ENCODE measurements at regions of chr2 and their contacts with region 1.

Region 1: GRCh38 chr2:84939426-84940087 is 31.4 kb upstream of the KCMF1 start:
- DNase-seq: peak; percentile 80
- H3K4me3 ChIP-seq: peak overlapping the region in 1 of 4 donors; percentile 27
- H3K27ac ChIP-seq: peak overlapping the region; percentile 61 to 79 (median 75)
- H3K4me1 ChIP-seq: peaks cover 6 to 34% (median 16%) of the 10 kb centered on the region in 4 donors
- H3K27me3 ChIP-seq: no peaks in the 10 kb centered on the region
- CTCF ChIP-seq: peak in 2 of 5 experiments; percentile 29 to 40
- EP300 ChIP-seq: no peak
- POLR2A ChIP-seq: no peak

Region 2: DNA sequence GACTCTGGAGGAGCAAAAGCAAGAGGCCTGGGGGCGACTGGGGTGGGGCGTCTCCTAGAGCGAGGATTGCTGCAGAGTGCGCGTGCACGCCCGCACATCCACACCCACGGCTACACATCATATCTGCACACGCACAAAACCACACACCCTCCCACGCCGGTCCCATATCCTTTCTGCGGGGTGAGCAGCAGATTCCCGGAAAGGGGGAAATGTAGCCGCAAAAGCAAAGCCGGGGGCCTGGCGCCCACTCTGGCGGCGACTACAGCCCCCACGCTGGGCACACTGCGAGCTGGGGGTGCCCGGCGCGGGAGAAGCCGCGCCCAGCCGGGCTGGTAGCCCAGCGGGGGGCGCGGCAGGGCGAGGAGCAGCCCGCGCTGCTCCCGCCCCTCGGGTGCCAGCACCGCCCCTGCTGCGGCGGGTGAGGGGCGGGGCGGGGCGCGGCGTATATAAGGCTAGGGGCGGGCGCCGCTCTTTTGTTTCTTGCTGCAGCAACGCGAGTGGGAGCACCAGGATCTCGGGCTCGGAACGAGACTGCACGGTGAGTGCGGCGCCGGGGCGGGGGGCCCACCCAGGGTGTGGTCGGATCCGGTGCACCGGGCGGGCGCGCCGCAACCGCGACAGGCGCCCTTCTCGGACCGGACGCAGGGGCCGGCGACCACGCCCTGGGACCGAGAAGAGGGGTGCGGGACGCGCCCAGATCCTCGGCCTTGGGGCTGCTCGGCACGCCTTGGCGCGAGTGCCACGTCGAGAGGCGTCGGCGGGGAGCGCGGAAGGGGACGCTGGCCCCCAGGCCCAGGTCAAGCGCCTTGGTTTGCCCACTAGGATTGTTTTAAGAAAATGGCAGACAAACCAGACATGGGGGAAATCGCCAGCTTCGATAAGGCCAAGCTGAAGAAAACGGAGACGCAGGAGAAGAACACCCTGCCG is 34.1 kb before region 1 on chr2 and contains the start of gene TMSB10:
- in situ Hi-C with region 1: no loop called
- intact Hi-C with region 1: loop called (anchors 2 kb)
- DNase-seq: peak; percentile 93
- H3K4me3 ChIP-seq: peak within 1 kb of the TSS; percentile 86 to 97 (median 90)
- H3K27ac ChIP-seq: peak within 1 kb of the TSS; percentile 94 to 100 (median 98)
- H3K4me1 ChIP-seq: peaks cover 0 to 22% (median 17%) of the 10 kb centered on the region in 4 donors
- H3K27me3 ChIP-seq: no peaks in the 10 kb centered on the region
- CTCF ChIP-seq: peak in 1 of 5 experiments; percentile 14
- EP300 ChIP-seq: peak; percentile 59
- POLR2A ChIP-seq: peak; percentile 98
- total RNA-seq, gene TMSB10: 1,619 to 4,787 (median 3,693) TPM

Region 3: DNA sequence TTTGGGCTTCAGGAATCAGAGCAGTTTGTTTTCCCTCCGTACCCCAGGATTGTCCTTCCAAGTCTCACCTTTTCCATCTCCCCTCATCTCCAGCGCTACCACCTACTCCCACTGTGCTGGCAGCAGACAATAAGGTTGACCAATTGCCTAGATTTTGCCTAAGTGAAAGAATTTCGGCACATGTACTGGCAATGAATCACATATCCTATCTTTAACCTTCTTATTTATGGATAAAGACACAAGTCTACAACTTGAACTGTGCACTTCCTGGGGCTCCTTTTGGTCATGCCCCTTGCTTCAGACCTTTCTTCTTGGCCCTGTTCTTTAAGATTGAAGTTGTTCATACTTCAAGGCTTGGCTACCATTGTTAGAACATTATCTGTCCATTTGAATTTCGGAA is 102.8 kb after region 1 on chr2:
- in situ Hi-C with region 1: no loop called
- intact Hi-C with region 1: no loop called
- DNase-seq: no peak
- H3K4me3 ChIP-seq: no peak overlapping the region
- H3K27ac ChIP-seq: no peak overlapping the region
- H3K4me1 ChIP-seq: no peaks in the 10 kb centered on the region
- H3K27me3 ChIP-seq: no peaks in the 10 kb centered on the region
- CTCF ChIP-seq: no peak
- EP300 ChIP-seq: no peak
- POLR2A ChIP-seq: no peak

Region 4: GRCh38 chr2:85156153-85156552 is 216.6 kb after region 1 on chr2:
- in situ Hi-C with region 1: no loop called
- intact Hi-C with region 1: no loop called
- DNase-seq: no peak
- H3K4me3 ChIP-seq: no peak overlapping the region
- H3K27ac ChIP-seq: no peak overlapping the region
- H3K4me1 ChIP-seq: peaks cover 0 to 18% (median 7%) of the 10 kb centered on the region in 4 donors
- H3K27me3 ChIP-seq: no peaks in the 10 kb centered on the region
- CTCF ChIP-seq: no peak
- EP300 ChIP-seq: no peak
- POLR2A ChIP-seq: no peak